ENCODE measurements at regions of chr10 and their contacts with region 1.

Region 1: DNA sequence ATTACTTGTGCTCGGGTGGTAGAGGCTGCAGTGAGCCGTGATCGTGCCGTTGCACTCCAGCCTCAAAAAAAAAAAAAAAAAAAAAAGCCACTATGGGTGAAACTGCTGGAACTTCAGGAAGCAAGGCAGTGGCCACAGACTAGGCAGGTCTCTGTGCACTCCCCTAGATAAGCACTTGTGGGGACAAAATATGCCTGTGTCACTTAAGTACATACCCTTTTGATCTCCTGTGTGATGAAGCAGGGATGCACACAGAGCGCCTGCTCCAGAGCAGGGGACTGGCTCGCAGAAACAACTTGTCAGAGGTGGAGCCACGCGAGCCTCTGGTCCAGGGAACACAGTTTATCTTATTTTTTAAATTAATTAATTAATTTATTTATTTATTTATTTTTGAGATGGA is 42.9 kb upstream of the PSAP start:
- DNase-seq: no peak
- H3K4me3 Mint-ChIP-seq: no peak overlapping the region
- H3K27ac Mint-ChIP-seq: no peak overlapping the region
- H3K4me1 Mint-ChIP-seq: peaks cover 7% of the 10 kb centered on the region
- H3K27me3 Mint-ChIP-seq: no peaks in the 10 kb centered on the region
- CTCF ChIP-seq: no peak

Region 2: DNA sequence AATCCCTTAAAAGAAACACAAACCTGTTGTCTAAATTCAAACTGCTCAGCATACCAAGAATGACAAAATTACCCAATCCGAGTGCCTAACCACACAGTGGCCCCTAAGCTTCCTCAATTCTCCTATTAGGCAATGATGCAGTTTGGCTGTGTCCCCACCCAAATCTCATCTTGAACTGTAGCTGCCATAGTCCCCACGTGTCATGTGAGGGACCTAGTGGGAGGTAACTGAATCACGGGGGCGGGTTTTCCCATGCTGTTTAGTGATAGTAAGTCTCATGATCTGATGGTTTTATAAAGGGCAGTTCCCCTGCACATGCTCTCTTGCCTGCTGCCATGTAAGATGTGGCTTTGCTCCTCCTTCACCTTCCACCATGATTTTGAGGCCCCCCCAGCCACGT is 64.7 kb before region 1 on chr10:
- CTCF ChIA-PET with region 1: interaction called, 28 read pairs
- POLR2A ChIA-PET with region 1: interaction called, 5 read pairs
- intact Hi-C with region 1: loop called (anchors 1 kb)
- DNase-seq: no peak
- H3K4me3 Mint-ChIP-seq: no peak overlapping the region
- H3K27ac Mint-ChIP-seq: no peak overlapping the region
- H3K4me1 Mint-ChIP-seq: peaks cover 12% of the 10 kb centered on the region
- H3K27me3 Mint-ChIP-seq: no peaks in the 10 kb centered on the region
- CTCF ChIP-seq: no peak

Region 3: GRCh38 chr10:71909399-71910083 is 15.6 kb after region 1 on chr10:
- CTCF ChIA-PET with region 1: interaction called, 14 read pairs
- POLR2A ChIA-PET with region 1: no interaction called
- intact Hi-C with region 1: no loop called
- DNase-seq: no peak
- H3K4me3 Mint-ChIP-seq: no peak overlapping the region
- H3K27ac Mint-ChIP-seq: no peak overlapping the region
- H3K4me1 Mint-ChIP-seq: no peaks in the 10 kb centered on the region
- H3K27me3 Mint-ChIP-seq: no peaks in the 10 kb centered on the region
- CTCF ChIP-seq: no peak

Region 4: DNA sequence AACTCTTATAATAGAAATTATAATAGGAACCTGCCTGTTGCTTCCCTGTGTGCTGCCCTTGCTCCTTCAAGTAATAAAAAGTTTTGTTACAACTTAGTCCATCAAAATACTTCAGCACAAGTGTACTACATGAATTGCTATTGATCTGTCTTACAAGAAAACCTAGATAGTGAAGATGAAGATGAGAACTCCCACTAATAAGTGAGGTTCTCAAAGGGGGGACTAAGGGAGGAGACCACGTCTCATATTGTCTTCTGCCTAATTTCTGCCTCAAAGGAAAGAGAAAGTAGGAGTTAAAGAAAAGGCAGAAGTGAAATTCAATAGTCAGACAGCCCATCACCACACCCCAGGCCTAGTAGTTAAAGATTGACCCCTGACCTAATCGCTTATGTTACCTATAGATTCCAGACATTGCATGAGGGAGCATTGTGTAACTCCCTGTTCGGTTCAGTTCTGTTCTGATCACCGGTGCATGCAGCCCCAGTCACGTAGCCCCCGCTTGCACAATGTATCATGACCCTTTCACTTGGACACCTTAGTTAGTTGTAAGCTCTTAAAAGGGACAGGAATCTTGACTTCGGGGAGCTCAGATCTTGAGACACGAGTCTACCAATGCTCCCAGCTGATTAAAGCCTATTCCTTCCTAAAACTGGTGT is 52.0 kb after region 1 on chr10:
- CTCF ChIA-PET with region 1: no interaction called
- POLR2A ChIA-PET with region 1: no interaction called
- intact Hi-C with region 1: no loop called
- DNase-seq: peak; percentile 36
- H3K4me3 Mint-ChIP-seq: no peak overlapping the region
- H3K27ac Mint-ChIP-seq: no peak overlapping the region
- H3K4me1 Mint-ChIP-seq: no peaks in the 10 kb centered on the region
- H3K27me3 Mint-ChIP-seq: no peaks in the 10 kb centered on the region
- CTCF ChIP-seq: no peak

Region 5: GRCh38 chr10:71957546-71958275 is 63.8 kb after region 1 on chr10:
- CTCF ChIA-PET with region 1: interaction called, 20 read pairs
- POLR2A ChIA-PET with region 1: no interaction called
- intact Hi-C with region 1: no loop called
- DNase-seq: no peak
- H3K4me3 Mint-ChIP-seq: no peak overlapping the region
- H3K27ac Mint-ChIP-seq: no peak overlapping the region
- H3K4me1 Mint-ChIP-seq: peaks cover 10% of the 10 kb centered on the region
- H3K27me3 Mint-ChIP-seq: no peaks in the 10 kb centered on the region
- CTCF ChIP-seq: no peak

Measured in MCF 10A (cell line).